K562 (cell line): ENCODE measurements at regions of chr16 and their contacts with region 1.

Region 1: DNA sequence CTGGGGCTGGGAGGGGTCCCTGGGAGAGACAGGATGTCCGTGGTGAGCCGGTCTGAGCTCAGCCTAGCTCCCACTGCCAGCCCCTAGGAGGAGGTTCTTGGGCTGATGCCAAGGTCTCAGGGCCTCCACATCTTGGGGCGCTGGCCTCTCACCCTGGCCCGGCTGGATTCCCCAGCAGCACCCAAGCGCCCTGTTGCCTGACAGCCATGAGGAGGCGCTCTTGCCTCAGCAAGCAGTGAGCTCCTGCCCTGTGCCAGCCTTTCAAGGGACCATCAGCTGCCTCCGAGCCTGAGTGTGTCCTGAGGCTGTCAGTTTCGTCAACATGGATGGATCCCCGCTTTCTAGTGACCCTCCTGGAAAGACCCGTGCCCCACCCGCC is 234.9 kb upstream of the CIBAR2 start:
- DNase-seq: peak; percentile 75 to 86 (median 80)
- ATAC-seq: peak; percentile 98
- H3K4me3 ChIP-seq: no peak overlapping the region
- H3K27ac ChIP-seq: no peak overlapping the region
- H3K4me1 ChIP-seq: peaks cover 8 to 47% of the 10 kb centered on the region in 2 experiments
- H3K27me3 ChIP-seq: no peaks in the 10 kb centered on the region; a peak in 1 of 5 replicates
- CTCF ChIP-seq: peak; percentile 90 to 96 (median 94)
- EP300 ChIP-seq: no peak
- POLR2A ChIP-seq: no peak
- RAD21 ChIP-seq: peak; percentile 94 to 97

Region 2: DNA sequence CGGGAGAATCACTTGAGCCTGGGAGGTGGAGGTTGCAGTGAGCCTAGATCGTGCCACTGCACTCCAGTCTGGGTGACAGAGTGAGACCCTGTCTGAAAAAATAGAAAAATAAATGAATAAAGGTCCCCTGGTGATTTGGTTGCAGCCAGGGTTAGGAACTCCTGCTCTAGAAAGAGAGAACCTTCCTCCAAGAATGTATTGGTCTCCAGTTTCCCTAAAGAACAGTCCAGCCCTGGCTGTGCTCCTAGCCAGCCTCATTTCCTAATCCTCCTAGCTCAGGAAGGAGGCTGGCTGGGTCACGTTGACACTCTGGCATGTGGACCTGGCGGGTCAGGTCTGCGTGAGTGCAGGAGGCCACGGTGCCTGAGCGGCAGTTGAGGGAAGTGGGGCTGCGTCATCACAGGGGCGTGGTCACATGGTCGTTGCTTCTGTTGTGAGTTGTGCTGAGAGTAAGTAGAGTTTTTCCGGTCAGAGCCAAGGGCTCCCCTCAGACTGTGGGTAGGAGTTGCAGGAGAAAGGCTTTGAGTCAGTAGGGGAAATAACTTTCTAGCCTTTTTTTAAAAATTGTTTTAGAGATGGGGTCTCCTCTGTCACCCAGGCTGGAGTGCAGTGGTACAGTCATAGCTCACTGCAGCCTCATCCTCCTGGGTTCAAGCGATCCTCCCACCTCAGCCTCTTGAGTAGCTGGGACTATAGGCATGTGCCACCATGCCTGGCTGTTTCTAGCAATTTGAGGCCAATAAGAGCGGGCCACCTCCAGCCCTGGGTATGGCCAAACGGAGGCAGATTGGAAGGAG is 41.0 kb before region 1 on chr16:
- CTCF ChIA-PET with region 1: interaction called, 3 read pairs
- POLR2A ChIA-PET with region 1: interaction called, 3 read pairs
- in situ Hi-C with region 1: no loop called
- intact Hi-C with region 1: loop called (anchors 5 kb)
- DNase-seq: peak; percentile 76 to 95 (median 82)
- ATAC-seq: peak; percentile 83
- H3K4me3 ChIP-seq: no peak overlapping the region
- H3K27ac ChIP-seq: peak overlapping the region; percentile 87
- H3K4me1 ChIP-seq: peaks cover 70 to 94% of the 10 kb centered on the region in 2 experiments
- H3K27me3 ChIP-seq: no peaks in the 10 kb centered on the region
- CTCF ChIP-seq: no peak
- EP300 ChIP-seq: peak; percentile 58
- POLR2A ChIP-seq: peak; percentile 57; the same call in 1 of the 2 replicates
- RAD21 ChIP-seq: no peak; a peak in 1 of 4 replicates

Region 3: DNA sequence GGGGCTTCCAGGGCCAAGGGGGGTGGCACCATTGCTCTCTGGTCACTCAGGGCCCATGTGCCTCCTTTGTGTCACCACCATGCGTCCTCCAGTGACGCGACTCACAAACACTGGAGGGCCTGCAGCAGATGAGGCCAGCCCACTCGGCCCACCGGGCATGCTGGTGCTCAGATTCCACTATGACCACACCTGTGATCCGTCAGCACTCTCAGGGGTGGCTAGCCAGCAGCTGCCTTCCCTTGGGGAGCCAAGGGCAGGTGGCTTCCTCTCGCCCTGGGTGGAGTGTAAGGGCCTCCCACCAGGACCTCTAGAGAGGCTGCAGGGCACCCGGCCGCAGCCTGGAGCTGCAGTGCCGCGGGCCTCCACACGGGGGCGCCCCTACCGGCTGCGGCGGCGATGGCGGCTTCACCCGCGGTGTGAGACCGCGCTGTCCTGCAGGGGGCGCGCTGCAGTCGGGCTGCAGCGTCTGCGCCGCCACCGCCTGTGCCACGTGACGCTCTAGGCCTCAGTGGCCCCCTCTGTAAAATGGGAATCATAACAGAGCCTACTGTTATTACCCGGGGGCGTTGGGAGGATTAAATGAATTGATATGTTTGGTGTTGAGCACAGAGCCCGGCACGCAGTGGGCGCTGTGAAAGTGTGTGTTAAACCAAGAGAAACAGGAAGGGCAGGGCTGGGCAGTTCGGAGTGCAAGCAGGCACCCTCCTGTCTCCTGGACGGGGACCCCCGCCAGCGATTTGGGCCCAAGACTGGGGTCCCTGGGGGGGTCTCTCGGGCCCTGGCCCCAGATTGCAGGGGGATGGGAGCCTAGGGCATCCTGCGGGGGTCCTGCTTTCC is 73.5 kb after region 1 on chr16:
- CTCF ChIA-PET with region 1: interaction called, 16 read pairs
- POLR2A ChIA-PET with region 1: no interaction called
- in situ Hi-C with region 1: no loop called
- intact Hi-C with region 1: no loop called
- DNase-seq: peak; percentile 92 to 94 (median 92)
- ATAC-seq: peak; percentile 83
- H3K4me3 ChIP-seq: no peak overlapping the region
- H3K27ac ChIP-seq: no peak overlapping the region; the same call in 2 of the 3 replicates
- H3K4me1 ChIP-seq: peaks cover 23 to 87% of the 10 kb centered on the region in 2 experiments
- H3K27me3 ChIP-seq: no peaks in the 10 kb centered on the region
- CTCF ChIP-seq: peak; percentile 100
- EP300 ChIP-seq: no peak
- POLR2A ChIP-seq: no peak
- RAD21 ChIP-seq: peak; percentile 98 to 99